Caco-2 (cell line): ENCODE measurements at regions of chr17 and their contacts with region 1.

Region 1: DNA sequence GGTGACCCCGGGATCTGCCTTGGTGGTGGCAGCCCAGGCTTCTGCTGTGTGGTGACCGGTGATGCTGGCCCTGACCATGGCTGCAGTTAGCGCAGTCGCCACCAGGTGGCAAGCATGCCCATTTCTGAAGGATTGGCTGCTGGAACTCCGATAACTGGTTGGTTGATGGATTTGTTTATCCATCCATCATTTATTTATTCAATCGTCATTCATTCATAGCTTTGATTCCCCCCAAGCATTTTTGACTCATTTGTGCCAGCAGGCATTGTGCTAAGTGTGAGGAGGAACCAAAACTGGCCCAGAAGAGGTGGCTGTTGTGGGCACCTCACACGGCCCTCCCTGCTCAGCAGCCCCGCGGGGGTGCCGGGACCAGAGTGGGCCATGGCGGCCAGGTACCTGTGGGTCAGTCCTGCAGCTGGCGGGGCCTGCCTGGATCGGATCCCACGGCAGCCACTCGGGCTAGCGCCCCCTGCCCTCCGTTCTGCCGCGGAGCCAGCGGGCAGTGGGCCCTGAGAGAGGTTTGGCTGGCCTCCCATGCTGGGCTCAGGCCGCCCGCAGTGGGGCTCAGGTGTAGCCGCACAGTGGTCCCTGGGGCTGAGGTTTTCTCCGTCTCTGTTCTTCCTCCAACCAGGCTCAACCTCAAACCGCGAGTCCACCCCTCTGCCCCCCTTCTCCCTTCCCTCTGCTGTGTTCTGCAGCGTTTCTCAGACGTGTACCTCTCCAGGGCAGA is 28.8 kb upstream of the ITGA3 start:
- DNase-seq: peak; percentile 58 to 75
- H3K4me3 ChIP-seq: no peak overlapping the region
- H3K4me3 Mint-ChIP-seq: no peak overlapping the region
- H3K27ac Mint-ChIP-seq: no peak overlapping the region
- H3K4me1 ChIP-seq: no peaks in the 10 kb centered on the region
- H3K4me1 Mint-ChIP-seq: peaks cover 7% of the 10 kb centered on the region
- H3K27me3 ChIP-seq: no peaks in the 10 kb centered on the region
- H3K27me3 Mint-ChIP-seq: no peaks in the 10 kb centered on the region
- CTCF ChIP-seq: peak; percentile 64 to 73

Region 2: DNA sequence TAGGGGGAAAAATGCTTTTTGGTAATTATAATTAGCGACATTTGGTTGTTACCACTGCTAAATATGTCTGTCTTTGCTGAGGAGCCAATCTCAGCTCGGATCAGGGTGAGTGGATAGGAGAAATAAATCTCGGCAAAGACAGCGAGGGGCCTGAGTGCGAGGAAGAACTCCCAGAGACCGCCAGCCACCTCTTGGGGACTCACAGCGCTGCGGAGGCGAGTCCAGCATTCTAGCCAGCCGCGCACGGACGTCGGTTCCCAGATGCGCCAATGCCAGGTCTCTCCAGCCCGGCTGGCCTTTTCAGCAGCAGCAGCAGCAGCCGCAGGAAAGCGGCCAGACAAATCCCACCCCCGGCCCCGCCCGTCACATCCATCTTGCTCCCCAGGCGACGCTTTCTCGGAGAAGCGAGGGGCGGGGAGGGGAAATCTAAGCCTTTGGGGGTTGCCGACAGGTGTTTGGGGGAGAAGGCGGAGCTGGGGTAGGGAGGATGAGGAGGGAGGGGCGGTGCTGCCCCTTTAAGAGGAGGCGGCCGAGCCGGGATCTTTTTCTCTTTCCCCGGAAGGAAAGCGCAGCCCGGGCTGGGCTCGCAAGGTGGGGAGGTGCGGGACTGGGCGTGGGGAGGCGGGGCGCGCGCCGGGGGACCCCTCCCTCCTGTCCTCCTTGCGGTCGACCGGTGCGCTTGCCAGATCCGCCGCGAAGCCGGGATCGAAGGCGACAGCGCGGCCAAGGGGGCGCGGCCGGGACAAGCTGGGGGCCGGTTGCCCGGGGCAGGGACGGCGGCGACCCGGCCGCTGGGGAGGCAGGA is 28.6 kb after region 1 on chr17 and contains the start of gene ITGA3:
- CTCF ChIA-PET with region 1: interaction called, 3 read pairs
- POLR2A ChIA-PET with region 1: no interaction called
- intact Hi-C with region 1: loop called (anchors 2 kb)
- DNase-seq: peak; percentile 77 to 80
- H3K4me3 ChIP-seq: peak within 1 kb of the TSS; percentile 74
- H3K4me3 Mint-ChIP-seq: peak within 1 kb of the TSS; percentile 86
- H3K27ac Mint-ChIP-seq: peak within 1 kb of the TSS; percentile 71
- H3K4me1 ChIP-seq: peaks cover 48% of the 10 kb centered on the region
- H3K4me1 Mint-ChIP-seq: peaks cover 24% of the 10 kb centered on the region
- H3K27me3 ChIP-seq: no peaks in the 10 kb centered on the region
- H3K27me3 Mint-ChIP-seq: no peaks in the 10 kb centered on the region
- CTCF ChIP-seq: no peak
- total RNA-seq, gene ITGA3: 10.4 and 14.7 TPM in 2 replicates

Region 3: GRCh38 chr17:50087246-50087911 is 60.3 kb after region 1 on chr17:
- CTCF ChIA-PET with region 1: interaction called, 4 read pairs
- POLR2A ChIA-PET with region 1: no interaction called
- intact Hi-C with region 1: loop called (anchors 1 kb)
- DNase-seq: peak; percentile 63 to 75
- H3K4me3 ChIP-seq: no peak overlapping the region
- H3K4me3 Mint-ChIP-seq: no peak overlapping the region
- H3K27ac Mint-ChIP-seq: no peak overlapping the region
- H3K4me1 ChIP-seq: no peaks in the 10 kb centered on the region
- H3K4me1 Mint-ChIP-seq: no peaks in the 10 kb centered on the region
- H3K27me3 ChIP-seq: no peaks in the 10 kb centered on the region
- H3K27me3 Mint-ChIP-seq: no peaks in the 10 kb centered on the region
- CTCF ChIP-seq: peak; percentile 74 to 75